B cell (primary cell): ENCODE measurements at regions of chr20 and their contacts with region 1.

Region 1: GRCh38 chr20:44966030-44966961 is at the start of gene STK4:
- DNase-seq: peak; percentile 98
- ATAC-seq: peak; percentile 86
- H3K4me3 ChIP-seq: peak within 1 kb of the TSS; percentile 86 to 99 (median 90)
- H3K4me3 Mint-ChIP-seq: peak within 1 kb of the TSS; percentile 94
- H3K27ac ChIP-seq: peak within 1 kb of the TSS; percentile 91
- H3K27ac Mint-ChIP-seq: peak within 1 kb of the TSS; percentile 98
- H3K4me1 ChIP-seq: peaks cover 47 to 59% of the 10 kb centered on the region in 2 donors
- H3K4me1 Mint-ChIP-seq: peaks cover 54% of the 10 kb centered on the region
- H3K27me3 ChIP-seq: no peaks in the 10 kb centered on the region
- H3K27me3 Mint-ChIP-seq: no peaks in the 10 kb centered on the region
- CTCF ChIP-seq: peak; percentile 68
- total RNA-seq, gene STK4: 323 and 324 TPM in 2 replicates

Region 2: DNA sequence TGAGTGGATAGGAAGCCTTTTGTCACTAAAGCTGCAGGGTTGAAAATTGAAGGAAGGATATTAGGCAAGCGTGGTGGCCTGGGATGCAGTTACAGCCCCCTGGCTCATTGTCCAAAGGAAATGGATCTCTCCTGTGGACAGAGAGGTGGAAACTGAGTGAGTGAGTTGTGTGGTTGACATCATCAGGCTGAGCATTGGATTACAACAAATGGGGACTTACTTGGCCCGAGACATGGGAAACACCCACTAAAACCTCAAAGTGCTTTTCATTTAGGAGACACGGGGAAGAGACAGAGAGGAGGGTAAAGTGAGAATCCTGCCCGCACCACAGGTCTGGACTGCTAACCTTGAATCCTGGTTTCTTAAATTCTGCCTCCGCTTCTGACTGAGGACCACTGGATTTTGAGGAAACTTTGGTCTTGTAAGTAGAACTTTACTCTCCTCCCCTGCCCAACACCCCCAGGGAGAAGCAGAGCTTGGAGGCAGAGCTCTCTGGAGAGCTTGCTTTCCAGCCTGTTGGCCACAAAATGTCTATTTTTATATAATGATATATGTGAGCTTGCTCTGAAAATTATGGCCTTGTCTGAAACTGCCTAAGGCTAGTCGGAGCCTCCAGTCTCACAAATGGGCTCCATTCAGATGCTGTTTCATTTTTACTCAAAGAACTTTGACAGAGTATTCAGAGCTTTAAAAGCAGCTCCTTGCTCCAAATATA is 383.8 kb before region 1 on chr20 and contains the start of gene PKIG:
- CTCF ChIA-PET with region 1: no interaction called
- POLR2A ChIA-PET with region 1: no interaction called
- intact Hi-C with region 1: loop called (anchors 10 kb)
- DNase-seq: peak; percentile 57
- ATAC-seq: no peak
- H3K4me3 ChIP-seq: peak within 1 kb of the TSS; percentile 57 to 94 (median 76)
- H3K4me3 Mint-ChIP-seq: peak within 1 kb of the TSS; percentile 92
- H3K27ac ChIP-seq: peak within 1 kb of the TSS; percentile 85 to 89
- H3K27ac Mint-ChIP-seq: peak within 1 kb of the TSS; percentile 91
- H3K4me1 ChIP-seq: peaks cover 68 to 79% of the 10 kb centered on the region in 2 donors
- H3K4me1 Mint-ChIP-seq: peaks cover 86% of the 10 kb centered on the region
- H3K27me3 ChIP-seq: no peaks in the 10 kb centered on the region
- H3K27me3 Mint-ChIP-seq: no peaks in the 10 kb centered on the region
- CTCF ChIP-seq: no peak
- total RNA-seq, gene PKIG: 117 and 128 TPM in 2 replicates

Region 3: DNA sequence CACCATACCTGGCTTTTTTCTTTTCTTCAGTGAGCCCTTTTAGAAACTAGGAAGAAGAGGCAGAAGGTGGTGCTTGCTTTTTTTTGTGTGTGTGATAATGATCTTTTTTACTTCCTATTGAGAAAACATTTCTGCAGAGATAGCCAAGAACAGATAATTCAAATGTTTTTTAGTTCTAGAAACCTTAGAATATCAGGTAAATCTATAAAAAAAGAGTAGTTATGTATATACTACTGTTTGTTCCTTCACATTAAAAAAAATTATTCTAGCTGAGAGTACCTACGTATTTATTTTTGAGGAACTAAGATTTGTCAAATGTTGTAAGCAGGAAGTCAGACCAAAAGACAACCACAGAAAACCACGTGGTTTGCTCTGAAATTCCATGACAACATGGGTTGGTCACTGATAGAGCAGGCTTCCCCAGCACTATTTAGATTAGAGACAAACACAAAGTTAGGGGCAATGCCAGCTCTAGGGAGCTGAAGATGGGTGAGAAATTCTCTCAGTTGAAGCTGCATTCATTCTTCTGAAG is 12.9 kb after region 1 on chr20:
- CTCF ChIA-PET with region 1: interaction called, 32 read pairs
- POLR2A ChIA-PET with region 1: interaction called, 43 read pairs
- intact Hi-C with region 1: loop called (anchors 1 kb)
- DNase-seq: peak; percentile 93
- ATAC-seq: peak; percentile 91
- H3K4me3 ChIP-seq: peak overlapping the region; percentile 4 to 54 (median 32)
- H3K4me3 Mint-ChIP-seq: peak overlapping the region; percentile 68
- H3K27ac ChIP-seq: peak overlapping the region; percentile 97 to 98
- H3K27ac Mint-ChIP-seq: peak overlapping the region; percentile 95
- H3K4me1 ChIP-seq: peaks cover 34 to 43% of the 10 kb centered on the region in 2 donors
- H3K4me1 Mint-ChIP-seq: peaks cover 65% of the 10 kb centered on the region
- H3K27me3 ChIP-seq: no peaks in the 10 kb centered on the region
- H3K27me3 Mint-ChIP-seq: no peaks in the 10 kb centered on the region
- CTCF ChIP-seq: no peak

Region 4: DNA sequence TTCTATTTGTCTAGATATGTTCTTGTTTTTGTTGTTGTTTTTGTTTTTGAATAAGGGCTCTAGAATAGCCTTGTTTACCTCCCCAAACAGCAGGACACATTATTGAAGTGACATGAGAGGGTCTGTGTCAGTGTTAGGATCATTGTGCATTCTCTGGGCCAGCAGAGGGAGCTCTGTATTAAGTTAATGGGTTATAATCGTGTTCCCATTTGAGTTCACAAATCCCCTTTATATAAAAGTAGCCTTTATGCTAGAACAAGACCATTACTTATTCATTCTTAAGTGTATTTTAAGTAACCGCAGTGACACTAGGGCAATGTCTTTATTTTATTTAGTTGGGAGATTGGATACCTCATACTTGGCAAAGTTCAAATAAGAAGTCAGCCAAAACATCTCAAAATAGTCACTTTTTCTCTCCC is 44.8 kb after region 1 on chr20:
- CTCF ChIA-PET with region 1: interaction called, 3 read pairs
- POLR2A ChIA-PET with region 1: no interaction called
- intact Hi-C with region 1: loop called (anchors 5 kb)
- DNase-seq: peak; percentile 65
- ATAC-seq: peak; percentile 58
- H3K4me3 ChIP-seq: no peak overlapping the region
- H3K4me3 Mint-ChIP-seq: no peak overlapping the region
- H3K27ac ChIP-seq: peak overlapping the region in 1 of 2 donors; percentile 59
- H3K27ac Mint-ChIP-seq: no peak overlapping the region
- H3K4me1 ChIP-seq: no peaks in the 10 kb centered on the region
- H3K4me1 Mint-ChIP-seq: peaks cover 25% of the 10 kb centered on the region
- H3K27me3 ChIP-seq: no peaks in the 10 kb centered on the region
- H3K27me3 Mint-ChIP-seq: no peaks in the 10 kb centered on the region
- CTCF ChIP-seq: peak; percentile 76

Region 5: DNA sequence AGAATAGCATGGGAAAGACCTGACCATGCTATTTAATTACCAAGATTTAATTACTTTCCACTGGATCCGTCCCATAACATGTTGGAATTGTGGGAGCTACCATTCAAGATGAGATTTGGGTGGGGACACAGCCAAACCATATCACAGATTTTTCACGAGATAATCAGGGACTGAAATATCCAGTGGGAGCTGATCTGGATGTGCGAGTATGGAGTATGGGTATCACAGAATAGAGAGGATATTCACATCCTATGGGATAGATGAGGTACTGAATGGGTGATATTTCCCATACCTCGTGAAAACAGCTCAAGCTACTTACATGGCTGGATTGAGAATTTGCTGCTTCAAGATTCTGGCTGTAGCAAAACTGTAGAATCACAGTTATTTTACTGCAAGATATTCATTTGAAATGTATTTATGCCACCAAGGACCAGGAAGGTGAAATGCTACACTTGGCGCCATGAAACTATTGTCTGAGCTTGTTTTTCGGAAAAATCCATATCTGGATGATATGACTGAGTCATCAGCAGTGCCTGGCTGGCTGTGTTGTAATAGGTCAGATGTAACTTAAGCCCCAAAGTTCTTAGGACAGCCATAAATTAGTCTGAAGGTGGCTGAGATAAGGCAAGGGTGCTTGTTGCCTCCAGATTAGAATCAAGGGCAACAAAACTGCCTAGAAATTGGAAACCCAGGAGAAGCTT is 104.8 kb after region 1 on chr20:
- CTCF ChIA-PET with region 1: no interaction called
- POLR2A ChIA-PET with region 1: no interaction called
- intact Hi-C with region 1: no loop called
- DNase-seq: no peak
- ATAC-seq: no peak
- H3K4me3 ChIP-seq: no peak overlapping the region
- H3K4me3 Mint-ChIP-seq: no peak overlapping the region
- H3K27ac ChIP-seq: peak overlapping the region in 1 of 2 donors; percentile 34
- H3K27ac Mint-ChIP-seq: no peak overlapping the region
- H3K4me1 ChIP-seq: no peaks in the 10 kb centered on the region
- H3K4me1 Mint-ChIP-seq: peaks cover 31% of the 10 kb centered on the region
- H3K27me3 ChIP-seq: no peaks in the 10 kb centered on the region
- H3K27me3 Mint-ChIP-seq: no peaks in the 10 kb centered on the region
- CTCF ChIP-seq: no peak

Region 6: GRCh38 chr20:45235995-45236394 is 269.7 kb after region 1 on chr20:
- CTCF ChIA-PET with region 1: no interaction called
- POLR2A ChIA-PET with region 1: no interaction called
- intact Hi-C with region 1: no loop called
- DNase-seq: peak; percentile 7
- ATAC-seq: no peak
- H3K4me3 ChIP-seq: no peak overlapping the region
- H3K4me3 Mint-ChIP-seq: no peak overlapping the region
- H3K27ac ChIP-seq: no peak overlapping the region
- H3K27ac Mint-ChIP-seq: no peak overlapping the region
- H3K4me1 ChIP-seq: no peaks in the 10 kb centered on the region
- H3K4me1 Mint-ChIP-seq: peaks cover 1% of the 10 kb centered on the region
- H3K27me3 ChIP-seq: peaks cover 0 to 14% (median 2%) of the 10 kb centered on the region in 4 experiments
- H3K27me3 Mint-ChIP-seq: peaks cover 43% of the 10 kb centered on the region
- CTCF ChIP-seq: peak; percentile 27